Dendritic cell treated with granulocyte-macrophage colony-stimulating factor and Interleukin-4, amounts not matched to agents 40 ng/mL and 50 ng/mL, for 4 days (primary cell): ENCODE measurements at regions of chr1 and their contacts with region 1.

Region 1: GRCh38 chr1:203368624-203369451 is 17.9 kb upstream of the FMOD start:
- H3K4me3 Mint-ChIP-seq: no peak overlapping the region
- H3K27ac Mint-ChIP-seq: peak overlapping the region; percentile 5
- H3K4me1 Mint-ChIP-seq: peaks cover 32% of the 10 kb centered on the region
- H3K27me3 Mint-ChIP-seq: peaks cover 12% of the 10 kb centered on the region

Region 2: DNA sequence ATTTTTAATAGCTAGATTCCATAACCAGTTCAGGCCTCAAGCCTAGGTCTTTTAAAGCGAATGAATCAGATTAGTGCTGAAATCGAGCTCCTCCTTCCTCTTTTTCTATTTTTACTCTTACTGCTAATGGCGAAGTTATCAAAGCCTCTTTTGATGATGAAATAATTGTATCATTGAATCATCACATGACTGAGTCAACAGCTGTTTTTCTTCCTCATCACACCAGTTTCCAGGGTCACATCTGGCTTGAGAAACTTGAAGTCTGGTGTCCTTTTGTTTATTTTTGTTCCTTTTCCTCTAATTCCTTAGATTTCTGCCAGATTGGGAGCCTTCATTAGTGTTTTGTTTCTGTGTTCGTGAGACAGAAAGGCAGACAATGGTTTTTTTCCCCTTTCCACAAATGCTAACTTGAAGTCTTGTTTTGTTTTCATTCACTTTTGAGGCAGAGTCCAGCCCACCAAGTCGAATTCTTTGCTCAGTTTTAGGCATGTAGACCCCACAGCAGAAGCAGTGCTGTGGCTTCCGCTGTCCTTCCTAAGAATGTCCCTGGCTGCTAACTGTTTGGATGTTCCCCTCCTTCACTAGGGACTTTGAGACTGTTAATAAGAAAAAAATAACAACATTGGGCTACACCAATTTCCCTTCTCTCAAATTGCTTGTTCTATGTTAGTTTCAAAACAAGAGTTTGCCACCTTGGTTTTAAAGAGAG is 33.9 kb after region 1 on chr1:
- intact Hi-C with region 1: no loop called
- H3K4me3 Mint-ChIP-seq: no peak overlapping the region
- H3K27ac Mint-ChIP-seq: peak overlapping the region; percentile 77
- H3K4me1 Mint-ChIP-seq: peaks cover 51% of the 10 kb centered on the region
- H3K27me3 Mint-ChIP-seq: peaks cover 6% of the 10 kb centered on the region

Region 3: DNA sequence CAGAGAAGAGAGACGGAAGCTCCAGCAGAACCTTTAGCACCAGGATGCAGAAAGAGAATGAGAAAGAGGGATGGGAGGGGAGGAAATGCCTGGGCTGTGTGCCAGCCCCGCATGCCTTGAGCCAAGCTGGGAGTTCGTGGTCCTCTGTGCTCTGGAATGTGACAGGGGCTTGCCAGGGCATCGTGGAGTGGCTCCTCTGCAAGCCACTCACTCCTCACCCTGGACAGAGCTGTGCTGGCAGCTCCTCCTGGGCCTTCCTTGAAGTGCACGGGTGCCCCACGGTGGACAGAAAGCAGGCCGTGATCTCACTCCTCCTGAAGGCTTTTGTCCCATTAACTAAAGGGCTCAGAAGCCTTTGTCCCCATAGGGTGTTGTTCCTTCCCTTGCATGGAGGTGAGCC is 71.9 kb after region 1 on chr1:
- intact Hi-C with region 1: no loop called
- H3K4me3 Mint-ChIP-seq: no peak overlapping the region
- H3K27ac Mint-ChIP-seq: no peak overlapping the region
- H3K4me1 Mint-ChIP-seq: peaks cover 4% of the 10 kb centered on the region
- H3K27me3 Mint-ChIP-seq: peaks cover 33% of the 10 kb centered on the region

Region 4: GRCh38 chr1:203486618-203487370 is 118.0 kb after region 1 on chr1:
- intact Hi-C with region 1: loop called (anchors 1 kb)
- H3K4me3 Mint-ChIP-seq: peak overlapping the region; percentile 73
- H3K27ac Mint-ChIP-seq: no peak overlapping the region
- H3K4me1 Mint-ChIP-seq: peaks cover 18% of the 10 kb centered on the region
- H3K27me3 Mint-ChIP-seq: peaks cover 7% of the 10 kb centered on the region

Region 5: GRCh38 chr1:203537806-203538464 is 169.1 kb after region 1 on chr1:
- intact Hi-C with region 1: no loop called
- H3K4me3 Mint-ChIP-seq: no peak overlapping the region
- H3K27ac Mint-ChIP-seq: no peak overlapping the region
- H3K4me1 Mint-ChIP-seq: peaks cover 9% of the 10 kb centered on the region
- H3K27me3 Mint-ChIP-seq: peaks cover 1% of the 10 kb centered on the region